WTC11 (cell line): ENCODE measurements at regions of chr6 and their contacts with region 1.

Region 1: GRCh38 chr6:158518191-158519127 is 41.4 kb upstream of the TMEM181 start:
- DNase-seq: peak; percentile 75
- ATAC-seq: peak; percentile 84
- H3K4me3 Mint-ChIP-seq: peak overlapping the region; percentile 67
- H3K27ac Mint-ChIP-seq: peak overlapping the region; percentile 40; the same call in 1 of the 2 replicates
- H3K4me1 Mint-ChIP-seq: peaks cover 21% of the 10 kb centered on the region
- H3K27me3 Mint-ChIP-seq: peaks cover 35% of the 10 kb centered on the region
- CTCF ChIP-seq: no peak

Region 2: DNA sequence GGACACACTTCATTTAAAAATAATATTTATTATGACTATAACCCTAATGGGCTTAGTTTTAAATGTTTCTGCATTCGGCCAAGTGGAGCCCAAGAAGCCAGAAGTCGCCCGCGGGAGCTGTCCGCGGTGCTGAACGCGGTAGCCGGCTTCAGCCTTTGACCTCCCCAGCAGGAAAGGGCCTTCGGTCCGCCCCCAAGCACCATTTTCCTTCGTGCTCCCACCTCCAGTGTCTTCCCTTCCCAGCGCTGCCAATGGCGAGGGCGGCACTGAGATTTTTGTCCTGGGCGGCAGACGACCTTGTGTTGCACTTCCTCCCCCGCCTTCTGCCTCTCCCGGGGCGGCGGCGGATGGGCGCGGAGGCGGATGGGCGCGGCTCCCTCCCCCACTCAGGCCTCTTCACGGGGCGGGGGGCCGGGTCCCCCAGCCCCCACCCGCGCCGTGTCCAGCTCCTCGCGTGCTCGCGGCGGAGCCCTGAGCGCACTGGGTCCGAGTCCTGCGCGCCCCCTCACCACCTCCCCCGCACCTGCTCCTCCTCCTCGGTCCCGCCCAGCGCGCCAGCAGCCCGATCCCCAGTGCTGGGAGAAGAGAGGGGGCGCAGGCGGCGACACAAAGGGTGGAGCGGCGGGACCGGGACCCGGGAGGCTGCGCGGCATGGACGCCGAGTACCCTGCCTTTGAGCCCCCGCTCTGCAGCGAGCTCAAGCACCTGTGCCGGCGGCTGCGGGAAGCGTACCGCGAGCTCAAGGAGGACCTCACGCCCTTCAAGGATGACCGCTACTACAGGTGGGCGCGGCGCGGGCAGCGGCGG is 17.8 kb after region 1 on chr6:
- CTCF ChIA-PET with region 1: interaction called, 28 read pairs
- POLR2A ChIA-PET with region 1: interaction called, 4 read pairs
- DNase-seq: peak; percentile 87
- ATAC-seq: peak; percentile 57
- H3K4me3 Mint-ChIP-seq: peak overlapping the region; percentile 69
- H3K27ac Mint-ChIP-seq: no peak overlapping the region
- H3K4me1 Mint-ChIP-seq: peaks cover 16% of the 10 kb centered on the region
- H3K27me3 Mint-ChIP-seq: peaks cover 15% of the 10 kb centered on the region
- CTCF ChIP-seq: no peak

Region 3: DNA sequence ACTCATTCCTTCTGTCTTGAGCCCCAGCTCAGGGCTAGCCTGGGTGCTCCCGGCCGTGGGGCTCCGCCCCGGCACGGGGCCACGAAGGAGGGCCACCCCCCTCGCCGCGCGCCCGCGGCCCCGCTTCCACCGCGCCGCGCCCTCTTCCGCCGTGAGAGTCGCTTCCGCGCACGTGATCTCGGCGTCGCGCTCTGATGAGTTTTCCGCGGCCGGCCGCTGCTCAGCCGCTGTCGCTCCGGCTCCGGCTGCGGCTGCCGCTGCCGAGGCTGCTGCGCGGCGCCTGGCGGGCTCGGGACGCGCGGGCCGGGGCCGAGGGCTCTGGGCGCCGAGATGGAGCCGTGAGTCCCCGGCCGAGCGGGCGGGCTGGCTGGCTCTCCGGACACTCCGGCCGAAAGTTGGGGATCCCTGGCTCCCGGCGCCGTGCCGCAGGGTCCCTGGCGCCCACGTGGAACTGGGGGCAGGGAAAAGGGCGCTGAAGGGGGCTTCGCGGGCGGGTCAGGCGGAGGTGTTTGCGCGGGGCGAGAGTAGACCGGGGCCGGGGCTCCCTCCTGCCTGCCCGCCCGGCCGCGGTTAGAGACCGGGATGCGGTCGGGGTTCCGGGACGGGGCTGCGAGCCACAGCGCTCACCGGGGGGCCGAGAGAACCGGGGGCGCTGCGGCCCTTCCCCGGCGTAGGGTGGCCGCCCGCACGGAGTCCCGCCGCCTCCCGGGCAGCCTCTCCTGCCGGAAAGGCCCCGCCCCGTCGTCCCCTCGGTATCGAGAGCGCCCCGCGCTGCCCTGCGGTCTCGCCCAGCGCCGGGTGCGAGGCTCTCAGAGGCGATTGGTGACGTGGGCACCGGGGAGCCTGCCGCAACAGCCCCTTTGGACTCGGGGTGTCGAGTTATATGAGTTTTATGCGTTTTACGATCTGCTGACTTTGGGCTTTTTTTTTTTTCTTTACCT is 41.7 kb after region 1 on chr6 and contains the start of gene TMEM181:
- CTCF ChIA-PET with region 1: interaction called, 16 read pairs
- POLR2A ChIA-PET with region 1: no interaction called
- DNase-seq: peak; percentile 76
- ATAC-seq: peak; percentile 74
- H3K4me3 Mint-ChIP-seq: peak within 1 kb of the TSS; percentile 92
- H3K27ac Mint-ChIP-seq: peak within 1 kb of the TSS; percentile 93
- H3K4me1 Mint-ChIP-seq: peaks cover 27% of the 10 kb centered on the region
- H3K27me3 Mint-ChIP-seq: no peaks in the 10 kb centered on the region
- CTCF ChIP-seq: no peak
- total RNA-seq, gene TMEM181: 18.8 to 22.1 TPM (median 21.2 TPM) in 3 replicates

Region 4: GRCh38 chr6:160386869-160387530 is 1868.5 kb after region 1 on chr6:
- CTCF ChIA-PET with region 1: no interaction called
- POLR2A ChIA-PET with region 1: no interaction called
- DNase-seq: no peak
- ATAC-seq: peak; percentile 39; the same call in 1 of the 2 replicates
- H3K4me3 Mint-ChIP-seq: no peak overlapping the region
- H3K27ac Mint-ChIP-seq: no peak overlapping the region
- H3K4me1 Mint-ChIP-seq: peaks cover 3% of the 10 kb centered on the region; the same call in 1 of the 2 replicates
- H3K27me3 Mint-ChIP-seq: no peaks in the 10 kb centered on the region; the same call in 1 of the 2 replicates
- CTCF ChIP-seq: no peak